K562 (cell line): ENCODE measurements at regions of chr1 and their contacts with region 1.

Region 1: DNA sequence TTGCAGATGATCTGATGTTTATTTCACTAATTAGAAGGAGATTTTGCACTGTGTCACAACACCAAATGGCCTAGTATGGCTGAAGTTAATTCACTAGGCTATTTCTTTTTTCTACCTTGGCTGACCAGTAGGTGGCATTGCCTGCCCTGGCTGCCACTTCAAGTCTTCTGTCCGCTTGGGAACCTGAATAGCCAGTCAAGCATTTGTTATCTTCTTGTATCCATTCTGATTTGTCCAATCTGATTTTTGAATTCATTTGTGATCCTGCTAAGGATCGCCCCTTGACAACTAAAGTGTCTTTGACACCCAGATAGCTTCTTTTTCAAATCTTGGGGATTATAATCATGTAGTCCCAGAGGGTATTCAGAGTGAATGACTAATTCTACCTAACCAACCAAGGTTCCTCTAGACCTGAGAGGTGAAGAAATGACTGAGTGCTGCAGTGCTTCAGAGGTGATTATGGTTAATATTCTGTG is 99.4 kb downstream of the GIPC2 start:
- DNase-seq: peak; percentile 45 to 57 (median 48)
- ATAC-seq: peak; percentile 90
- H3K4me3 ChIP-seq: no peak overlapping the region
- H3K27ac ChIP-seq: no peak overlapping the region
- H3K4me1 ChIP-seq: no peaks in the 10 kb centered on the region
- H3K27me3 ChIP-seq: no peaks in the 10 kb centered on the region
- CTCF ChIP-seq: peak; percentile 76 to 80 (median 79)
- EP300 ChIP-seq: no peak
- POLR2A ChIP-seq: no peak
- RAD21 ChIP-seq: peak; percentile 65 to 78

Region 2: DNA sequence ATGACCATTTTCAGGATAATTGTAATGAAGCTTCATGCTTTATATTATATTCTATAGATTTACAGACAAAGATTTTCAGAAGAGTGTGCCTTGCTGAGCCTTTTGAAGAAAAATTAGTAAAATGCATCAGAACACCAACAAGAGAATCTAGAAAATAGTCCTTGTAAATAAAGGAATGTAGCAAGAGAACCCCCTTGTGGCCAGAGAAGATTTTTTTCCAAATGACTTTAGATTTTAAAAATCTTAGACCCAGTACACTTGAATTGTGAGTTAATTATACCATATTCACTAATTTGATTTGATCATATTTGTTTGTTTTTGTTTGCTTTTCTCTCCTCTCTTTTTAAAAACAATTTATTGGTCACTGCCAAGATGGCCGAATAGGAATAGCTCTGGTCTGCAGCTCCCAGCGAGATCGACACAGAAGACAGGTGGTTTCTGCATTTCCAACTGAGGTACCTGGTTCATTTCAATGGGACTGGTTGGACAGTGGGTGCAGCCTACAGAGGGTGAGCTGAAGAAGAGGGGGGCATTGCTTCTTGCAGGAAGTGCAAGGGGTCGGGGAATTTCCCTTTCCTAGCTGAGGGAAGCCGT is 462.3 kb after region 1 on chr1:
- CTCF ChIA-PET with region 1: no interaction called
- POLR2A ChIA-PET with region 1: no interaction called
- in situ Hi-C with region 1: no loop called
- intact Hi-C with region 1: loop called (anchors 2 kb)
- DNase-seq: peak in 2 of 4 experiments; percentile 6 to 9
- ATAC-seq: no peak
- H3K4me3 ChIP-seq: no peak overlapping the region
- H3K27ac ChIP-seq: no peak overlapping the region
- H3K4me1 ChIP-seq: no peaks in the 10 kb centered on the region
- H3K27me3 ChIP-seq: no peaks in the 10 kb centered on the region
- CTCF ChIP-seq: peak in 1 of 3 experiments; percentile 22; a peak in 1 of 6 replicates
- EP300 ChIP-seq: no peak
- POLR2A ChIP-seq: no peak
- RAD21 ChIP-seq: peak; percentile 29 to 45; a peak in 3 of 4 replicates

Region 3: DNA sequence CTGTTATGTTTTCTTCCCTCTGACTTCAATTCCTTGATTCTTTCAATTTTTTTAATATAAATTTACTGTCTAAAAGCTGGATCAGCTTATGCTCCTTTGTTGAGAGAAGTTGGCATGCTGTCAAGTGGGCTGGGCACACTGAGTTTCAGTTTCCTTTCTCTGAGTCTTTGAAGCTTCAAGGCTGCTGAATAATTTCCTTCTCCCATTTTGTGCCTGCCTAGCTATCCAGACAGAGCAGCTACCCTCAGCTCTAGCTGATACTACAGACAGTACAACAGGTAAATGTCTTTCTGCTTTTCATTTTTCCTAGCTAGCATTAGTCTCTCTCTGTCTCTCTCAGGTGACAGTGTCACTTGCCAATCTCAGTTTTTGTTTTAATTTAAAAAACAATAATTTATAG is 504.5 kb after region 1 on chr1 and contains the start of gene IFI44:
- CTCF ChIA-PET with region 1: no interaction called
- POLR2A ChIA-PET with region 1: no interaction called
- in situ Hi-C with region 1: loop called (anchors 25 kb)
- intact Hi-C with region 1: no loop called
- DNase-seq: no peak
- ATAC-seq: no peak
- H3K4me3 ChIP-seq: no peak within 1 kb of the TSS
- H3K27ac ChIP-seq: no peak within 1 kb of the TSS
- H3K4me1 ChIP-seq: no peaks in the 10 kb centered on the region
- H3K27me3 ChIP-seq: no peaks in the 10 kb centered on the region
- CTCF ChIP-seq: no peak
- EP300 ChIP-seq: no peak
- POLR2A ChIP-seq: no peak
- RAD21 ChIP-seq: no peak
- polyA plus RNA-seq, gene IFI44: not detected

Region 4: GRCh38 chr1:78676347-78676982 is 531.3 kb after region 1 on chr1:
- CTCF ChIA-PET with region 1: interaction called, 7 read pairs
- POLR2A ChIA-PET with region 1: no interaction called
- in situ Hi-C with region 1: loop called (anchors 25 kb)
- intact Hi-C with region 1: loop called (anchors 1 kb)
- DNase-seq: peak; percentile 23 to 60 (median 50)
- ATAC-seq: peak; percentile 64
- H3K4me3 ChIP-seq: no peak overlapping the region
- H3K27ac ChIP-seq: no peak overlapping the region
- H3K4me1 ChIP-seq: no peaks in the 10 kb centered on the region
- H3K27me3 ChIP-seq: no peaks in the 10 kb centered on the region
- CTCF ChIP-seq: peak; percentile 27 to 69 (median 38); a peak in 4 of 6 replicates
- EP300 ChIP-seq: no peak
- POLR2A ChIP-seq: no peak
- RAD21 ChIP-seq: peak; percentile 61 to 65

Region 5: GRCh38 chr1:79353224-79353623 is 1208.1 kb after region 1 on chr1:
- CTCF ChIA-PET with region 1: no interaction called
- POLR2A ChIA-PET with region 1: no interaction called
- in situ Hi-C with region 1: no loop called
- intact Hi-C with region 1: loop called (anchors 5 kb)
- DNase-seq: peak in 1 of 4 experiments; percentile 0
- ATAC-seq: no peak
- H3K4me3 ChIP-seq: no peak overlapping the region
- H3K27ac ChIP-seq: no peak overlapping the region
- H3K4me1 ChIP-seq: no peaks in the 10 kb centered on the region
- H3K27me3 ChIP-seq: no peaks in the 10 kb centered on the region
- CTCF ChIP-seq: 0 out of 6 replicates have a peak, but pooled peaks of 1 of the 3 experiments have one; percentile 18
- EP300 ChIP-seq: no peak
- POLR2A ChIP-seq: no peak
- RAD21 ChIP-seq: no peak